ENCODE measurements at regions of chr2 and their contacts with region 1.

Region 1: DNA sequence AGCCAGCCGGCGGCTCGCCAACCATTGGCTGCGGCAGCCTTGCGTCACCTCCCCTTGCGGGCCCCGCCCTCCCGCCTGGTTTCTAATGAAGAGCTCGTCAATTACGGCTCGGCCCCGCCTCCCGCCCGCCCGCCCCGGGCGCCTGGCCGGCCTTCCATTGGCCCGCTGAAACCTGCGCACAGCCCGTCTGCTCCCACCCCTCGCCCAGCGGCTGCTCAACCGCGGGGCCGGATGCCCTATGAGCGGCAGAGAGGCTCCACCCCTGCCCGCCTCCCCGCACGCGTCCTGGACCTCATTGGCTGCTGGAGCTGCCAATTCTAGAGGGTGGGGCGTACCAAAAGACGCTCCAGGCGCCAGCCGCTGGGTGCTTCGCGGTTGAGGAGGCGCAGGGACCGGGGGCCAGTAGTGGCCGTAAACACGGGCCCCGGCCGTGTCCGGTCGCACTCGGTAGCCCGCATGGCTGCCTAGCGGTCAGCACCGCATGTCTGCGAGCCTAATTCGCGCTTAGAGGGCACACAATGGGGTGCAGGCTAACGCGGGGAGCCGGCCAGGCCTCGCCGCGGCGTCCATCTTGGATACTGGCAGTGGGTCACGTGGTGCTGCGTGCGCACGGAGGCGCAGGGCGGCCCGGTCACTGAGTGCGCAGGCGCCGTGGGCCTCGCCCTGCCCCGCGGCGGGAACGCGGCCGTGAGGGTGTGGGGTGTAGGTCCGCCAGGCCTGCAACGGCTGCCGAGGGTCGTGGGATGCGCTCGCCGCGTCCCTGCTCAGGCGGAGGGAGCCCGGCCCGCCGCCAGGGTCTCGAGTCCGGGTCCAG is 454 bp upstream of the HDAC4 start:
- DNase-seq: peak; percentile 98
- ATAC-seq: peak; percentile 87
- H3K4me3 Mint-ChIP-seq: peak overlapping the region; percentile 92
- H3K27ac Mint-ChIP-seq: peak overlapping the region; percentile 98
- H3K4me1 Mint-ChIP-seq: peaks cover 31% of the 10 kb centered on the region
- H3K27me3 Mint-ChIP-seq: no peaks in the 10 kb centered on the region
- CTCF ChIP-seq: no peak

Region 2: DNA sequence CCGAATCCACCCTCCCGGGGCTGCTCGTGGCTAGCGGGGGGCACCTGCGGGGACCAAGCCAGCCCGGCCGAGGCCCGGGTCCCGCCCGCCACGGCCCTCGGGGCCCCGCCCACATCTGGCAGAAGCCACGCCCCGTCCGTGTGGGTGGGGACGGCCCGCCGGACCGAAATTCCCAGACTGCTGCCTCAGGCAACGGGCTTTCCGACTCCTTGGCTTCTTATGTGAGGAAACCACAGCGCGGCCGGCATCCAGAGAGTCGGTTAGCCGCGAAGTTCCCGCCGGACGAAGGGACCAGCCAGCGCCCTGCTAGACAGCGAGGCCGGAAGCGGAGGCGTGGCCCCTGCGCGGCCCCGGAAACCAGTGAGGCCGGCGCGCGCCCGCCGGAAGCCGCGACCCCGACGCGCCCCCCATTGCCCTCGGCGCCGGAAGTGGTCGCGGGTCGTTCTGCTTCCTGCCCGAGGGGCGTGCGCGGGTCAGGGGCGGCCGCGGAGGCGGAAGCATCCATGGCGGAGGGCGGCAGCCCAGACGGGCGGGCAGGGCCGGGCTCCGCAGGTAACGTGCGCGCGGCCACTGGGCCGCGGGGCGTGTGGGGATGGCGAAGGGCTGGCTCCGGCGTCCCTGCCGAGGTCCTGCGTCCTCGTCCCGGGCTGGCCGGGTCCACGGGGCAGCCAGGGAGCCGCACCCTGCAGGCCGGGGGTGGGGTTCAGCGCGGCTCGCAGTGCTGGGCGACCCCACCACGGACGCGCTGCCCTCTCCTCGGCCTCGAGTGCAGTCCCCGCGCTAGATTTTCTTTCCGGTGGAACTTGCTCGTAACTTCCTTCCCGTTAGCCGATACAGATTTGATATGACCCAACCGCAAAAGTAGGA is 974.5 kb before region 1 on chr2 and contains the start of gene ASB1:
- CTCF ChIA-PET with region 1: no interaction called
- POLR2A ChIA-PET with region 1: no interaction called
- intact Hi-C with region 1: loop called (anchors 2 kb)
- DNase-seq: peak; percentile 84
- ATAC-seq: peak; percentile 86
- H3K4me3 Mint-ChIP-seq: peak within 1 kb of the TSS; percentile 92
- H3K27ac Mint-ChIP-seq: peak within 1 kb of the TSS; percentile 94
- H3K4me1 Mint-ChIP-seq: peaks cover 39% of the 10 kb centered on the region
- H3K27me3 Mint-ChIP-seq: no peaks in the 10 kb centered on the region
- CTCF ChIP-seq: no peak
- total RNA-seq, gene ASB1: 44.5 and 49.8 TPM in 2 replicates

Region 3: DNA sequence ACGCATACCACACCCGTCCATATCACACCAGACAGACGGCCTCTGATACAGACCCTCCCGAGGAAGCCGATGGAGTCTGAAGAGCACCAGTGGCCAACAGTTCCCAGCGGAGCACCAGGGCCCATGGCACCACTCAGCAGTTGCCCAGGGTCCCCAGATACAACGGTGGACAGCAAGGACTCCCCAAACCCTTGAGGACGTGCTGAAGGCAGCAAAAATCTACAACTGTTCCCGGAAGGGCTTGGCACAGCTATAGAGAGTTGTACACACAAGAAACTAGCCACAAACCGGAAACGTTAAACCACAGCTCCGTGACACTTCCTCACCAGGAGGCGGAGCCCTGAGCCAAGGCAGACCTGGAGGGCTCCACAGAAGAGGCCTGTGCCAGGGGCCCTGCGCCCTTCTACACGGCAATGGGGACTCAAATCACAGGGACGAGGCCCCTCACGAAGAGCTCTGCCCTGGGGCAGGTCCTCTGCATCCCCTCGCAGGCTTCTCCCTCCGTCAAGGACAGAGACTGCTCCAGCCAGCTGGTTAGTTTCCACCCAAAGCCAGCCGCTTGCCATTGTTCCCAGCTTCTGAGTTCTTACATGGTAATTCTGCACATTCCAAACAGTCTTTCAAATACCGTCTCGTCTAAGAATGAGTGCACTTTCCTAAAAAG is 133.9 kb before region 1 on chr2:
- CTCF ChIA-PET with region 1: interaction called, 25 read pairs
- POLR2A ChIA-PET with region 1: interaction called, 14 read pairs
- intact Hi-C with region 1: loop called (anchors 1 kb)
- DNase-seq: peak; percentile 75
- ATAC-seq: peak; percentile 96
- H3K4me3 Mint-ChIP-seq: peak overlapping the region; percentile 73
- H3K27ac Mint-ChIP-seq: peak overlapping the region; percentile 44
- H3K4me1 Mint-ChIP-seq: peaks cover 59% of the 10 kb centered on the region
- H3K27me3 Mint-ChIP-seq: peaks cover 55% of the 10 kb centered on the region
- CTCF ChIP-seq: no peak

Region 4: GRCh38 chr2:239326831-239327535 is 74.3 kb before region 1 on chr2:
- CTCF ChIA-PET with region 1: no interaction called
- POLR2A ChIA-PET with region 1: interaction called, 16 read pairs
- intact Hi-C with region 1: no loop called
- DNase-seq: no peak
- ATAC-seq: peak; percentile 75
- H3K4me3 Mint-ChIP-seq: no peak overlapping the region
- H3K27ac Mint-ChIP-seq: peak overlapping the region; percentile 30
- H3K4me1 Mint-ChIP-seq: peaks cover 28% of the 10 kb centered on the region
- H3K27me3 Mint-ChIP-seq: no peaks in the 10 kb centered on the region
- CTCF ChIP-seq: no peak

Region 5: GRCh38 chr2:239380831-239381708 is 20.2 kb before region 1 on chr2:
- CTCF ChIA-PET with region 1: interaction called, 6 read pairs
- POLR2A ChIA-PET with region 1: interaction called, 108 read pairs
- intact Hi-C with region 1: loop called (anchors 1 kb)
- DNase-seq: peak; percentile 55
- ATAC-seq: peak; percentile 66
- H3K4me3 Mint-ChIP-seq: peak overlapping the region; percentile 85
- H3K27ac Mint-ChIP-seq: peak overlapping the region; percentile 91
- H3K4me1 Mint-ChIP-seq: peaks cover 43% of the 10 kb centered on the region
- H3K27me3 Mint-ChIP-seq: no peaks in the 10 kb centered on the region
- CTCF ChIP-seq: no peak

Region 6: DNA sequence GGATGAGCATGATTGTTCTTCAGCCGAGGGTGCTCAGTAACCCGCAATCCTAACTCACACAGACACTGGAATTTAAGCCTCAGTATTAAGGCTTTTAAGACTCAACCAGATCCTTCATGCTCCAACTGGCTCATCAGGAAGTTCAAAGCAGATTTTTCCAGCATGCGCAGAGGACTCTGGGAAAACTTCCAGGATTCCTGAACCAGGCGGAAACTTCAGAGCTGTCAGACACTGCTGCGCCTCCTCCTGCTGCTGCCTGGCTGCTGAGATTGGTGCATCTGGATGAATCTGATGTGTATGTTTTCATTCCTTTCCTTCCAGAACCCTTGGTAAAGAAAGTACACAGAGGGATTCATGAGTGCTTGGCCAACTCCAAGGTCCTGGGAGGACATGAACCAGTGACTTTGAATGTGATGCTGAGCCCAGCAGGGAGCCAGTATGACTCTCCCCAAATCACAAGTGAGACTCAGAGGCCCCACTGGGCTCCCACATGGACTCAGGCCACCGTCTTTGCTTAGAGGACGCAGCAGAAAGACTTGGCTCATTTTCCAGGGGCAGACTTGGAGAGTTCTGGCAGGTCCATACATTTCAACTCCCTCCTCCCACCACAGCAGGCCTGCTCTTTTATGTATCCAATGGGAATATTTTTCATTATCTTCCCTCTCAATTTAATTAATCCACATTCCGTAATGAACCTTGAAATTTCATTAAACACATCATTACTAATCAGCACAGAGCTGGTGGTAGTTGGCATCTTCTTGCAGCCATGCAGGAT is 143.1 kb after region 1 on chr2:
- CTCF ChIA-PET with region 1: no interaction called
- POLR2A ChIA-PET with region 1: no interaction called
- intact Hi-C with region 1: no loop called
- DNase-seq: no peak
- ATAC-seq: no peak
- H3K4me3 Mint-ChIP-seq: no peak overlapping the region
- H3K27ac Mint-ChIP-seq: no peak overlapping the region
- H3K4me1 Mint-ChIP-seq: no peaks in the 10 kb centered on the region
- H3K27me3 Mint-ChIP-seq: peaks cover 18% of the 10 kb centered on the region
- CTCF ChIP-seq: no peak

Region 7: GRCh38 chr2:240136013-240136670 is 734.9 kb after region 1 on chr2 and contains the start of gene COPS9:
- CTCF ChIA-PET with region 1: no interaction called
- POLR2A ChIA-PET with region 1: no interaction called
- intact Hi-C with region 1: loop called (anchors 5 kb)
- DNase-seq: peak; percentile 87
- ATAC-seq: peak; percentile 94
- H3K4me3 Mint-ChIP-seq: peak within 1 kb of the TSS; percentile 88
- H3K27ac Mint-ChIP-seq: peak within 1 kb of the TSS; percentile 56
- H3K4me1 Mint-ChIP-seq: peaks cover 27% of the 10 kb centered on the region
- H3K27me3 Mint-ChIP-seq: peaks cover 5% of the 10 kb centered on the region
- CTCF ChIP-seq: no peak
- total RNA-seq, gene COPS9: 78.6 and 81.1 TPM in 2 replicates

Region 8: GRCh38 chr2:240560480-240561326 is 1159.4 kb after region 1 on chr2:
- CTCF ChIA-PET with region 1: no interaction called
- POLR2A ChIA-PET with region 1: interaction called, 3 read pairs
- intact Hi-C with region 1: loop called (anchors 10 kb)
- DNase-seq: peak; percentile 99
- ATAC-seq: peak; percentile 70
- H3K4me3 Mint-ChIP-seq: peak overlapping the region; percentile 81
- H3K27ac Mint-ChIP-seq: peak overlapping the region; percentile 89
- H3K4me1 Mint-ChIP-seq: peaks cover 77% of the 10 kb centered on the region
- H3K27me3 Mint-ChIP-seq: no peaks in the 10 kb centered on the region
- CTCF ChIP-seq: no peak

Measured in activated B cell treated with CpG ODN at 0.5 μM for 24 hours (primary cell).